Activated CD4-positive, alpha-beta T cell treated with anti-CD3 and anti-CD28 coated beads for 36 hours (primary cell): ENCODE measurements at regions of chr7 and their contacts with region 1.

Region 1: GRCh38 chr7:12322284-12322902 is 81.3 kb downstream of the VWDE start:
- DNase-seq: peak; percentile 7
- ATAC-seq: no peak
- H3K4me3 Mint-ChIP-seq: no peak overlapping the region
- H3K27ac Mint-ChIP-seq: no peak overlapping the region
- H3K4me1 Mint-ChIP-seq: no peaks in the 10 kb centered on the region
- H3K27me3 Mint-ChIP-seq: no peaks in the 10 kb centered on the region

Region 2: DNA sequence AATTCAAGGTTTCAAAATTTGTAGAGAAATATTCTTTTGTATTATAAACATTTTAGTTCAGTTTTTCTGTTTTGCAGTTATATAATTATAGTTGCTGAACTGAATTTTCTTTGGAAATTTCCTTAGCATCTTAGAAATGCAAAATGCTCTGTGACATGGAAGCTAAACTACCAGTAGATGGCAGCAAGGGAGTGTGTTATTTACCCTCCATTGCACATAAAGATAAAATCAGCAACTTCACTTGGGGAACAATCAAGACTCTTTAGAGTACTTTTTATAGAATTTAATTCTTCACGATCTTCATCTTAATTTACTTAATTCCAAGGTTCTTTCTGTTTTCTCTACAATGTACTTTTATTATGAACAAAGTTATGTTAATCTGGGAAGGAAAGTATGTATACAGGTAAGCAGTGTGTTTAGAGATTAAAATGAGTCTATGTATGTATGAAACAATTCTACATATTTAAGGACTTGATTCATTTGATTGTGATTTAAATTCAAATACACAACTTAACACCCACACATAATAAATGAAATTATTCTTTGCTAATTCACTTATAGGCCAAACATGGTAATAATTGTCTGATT is 894.6 kb before region 1 on chr7:
- CTCF ChIA-PET with region 1: no interaction called
- POLR2A ChIA-PET with region 1: no interaction called
- intact Hi-C with region 1: loop called (anchors 1 to 5 kb)
- DNase-seq: no peak
- ATAC-seq: no peak
- H3K4me3 Mint-ChIP-seq: no peak overlapping the region
- H3K27ac Mint-ChIP-seq: no peak overlapping the region
- H3K4me1 Mint-ChIP-seq: no peaks in the 10 kb centered on the region
- H3K27me3 Mint-ChIP-seq: no peaks in the 10 kb centered on the region

Region 3: DNA sequence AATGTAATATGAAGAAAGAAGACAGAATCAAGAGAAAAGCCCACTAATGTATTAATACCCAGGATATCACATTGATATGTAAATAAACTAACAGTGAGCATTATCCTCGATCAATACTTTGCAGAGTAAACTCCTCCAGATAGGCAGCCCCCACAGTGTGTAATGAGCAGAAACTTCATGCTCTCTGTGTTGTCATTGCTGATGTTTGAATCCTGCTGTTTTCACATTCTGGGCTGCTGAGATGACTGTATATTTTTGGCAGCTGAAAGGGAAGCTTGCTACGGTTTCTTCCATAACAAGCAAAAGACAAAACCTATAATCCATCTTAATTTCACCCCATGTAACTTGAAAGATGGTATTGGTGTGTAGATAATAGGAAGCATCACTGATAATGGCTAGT is 475.1 kb before region 1 on chr7:
- CTCF ChIA-PET with region 1: no interaction called
- POLR2A ChIA-PET with region 1: no interaction called
- intact Hi-C with region 1: loop called in 1 of 2 experiments (anchors 5 kb)
- DNase-seq: no peak
- ATAC-seq: no peak
- H3K4me3 Mint-ChIP-seq: no peak overlapping the region
- H3K27ac Mint-ChIP-seq: no peak overlapping the region
- H3K4me1 Mint-ChIP-seq: no peaks in the 10 kb centered on the region
- H3K27me3 Mint-ChIP-seq: no peaks in the 10 kb centered on the region

Region 4: GRCh38 chr7:12211054-12211710 is 111.2 kb before region 1 on chr7 and contains the start of gene TMEM106B:
- CTCF ChIA-PET with region 1: no interaction called
- POLR2A ChIA-PET with region 1: no interaction called
- intact Hi-C with region 1: loop called (anchors 2 kb)
- DNase-seq: peak; percentile 99
- ATAC-seq: peak; percentile 92
- H3K4me3 Mint-ChIP-seq: peak within 1 kb of the TSS; percentile 98
- H3K27ac Mint-ChIP-seq: peak within 1 kb of the TSS; percentile 100
- H3K4me1 Mint-ChIP-seq: peaks cover 27% of the 10 kb centered on the region
- H3K27me3 Mint-ChIP-seq: no peaks in the 10 kb centered on the region
- total RNA-seq, gene TMEM106B: 21.6 to 25.3 TPM

Region 5: GRCh38 chr7:13577566-13578145 is 1255.3 kb after region 1 on chr7:
- CTCF ChIA-PET with region 1: no interaction called
- POLR2A ChIA-PET with region 1: no interaction called
- intact Hi-C with region 1: no loop called
- DNase-seq: no peak
- ATAC-seq: no peak
- H3K4me3 Mint-ChIP-seq: no peak overlapping the region
- H3K27ac Mint-ChIP-seq: no peak overlapping the region
- H3K4me1 Mint-ChIP-seq: no peaks in the 10 kb centered on the region
- H3K27me3 Mint-ChIP-seq: no peaks in the 10 kb centered on the region